ENCODE measurements at regions of chr13 and their contacts with region 1.

Region 1: GRCh38 chr13:48769107-48769704 is 115.5 kb downstream of the CYSLTR2 start:
- DNase-seq: peak; percentile 41
- H3K4me3 ChIP-seq: no peak overlapping the region
- H3K27ac ChIP-seq: peak overlapping the region; percentile 47
- H3K4me1 ChIP-seq: peaks cover 9% of the 10 kb centered on the region
- H3K27me3 ChIP-seq: no peaks in the 10 kb centered on the region
- CTCF ChIP-seq: peak; percentile 99

Region 2: GRCh38 chr13:48194379-48194754 is 574.8 kb before region 1 on chr13:
- intact Hi-C with region 1: no loop called
- DNase-seq: no peak
- H3K4me3 ChIP-seq: no peak overlapping the region
- H3K27ac ChIP-seq: no peak overlapping the region
- H3K4me1 ChIP-seq: no peaks in the 10 kb centered on the region
- H3K27me3 ChIP-seq: no peaks in the 10 kb centered on the region
- CTCF ChIP-seq: no peak

Region 3: GRCh38 chr13:48334534-48335127 is 434.6 kb before region 1 on chr13:
- intact Hi-C with region 1: loop called (anchors 2 kb)
- DNase-seq: no peak
- H3K4me3 ChIP-seq: no peak overlapping the region
- H3K27ac ChIP-seq: no peak overlapping the region
- H3K4me1 ChIP-seq: peaks cover 6% of the 10 kb centered on the region
- H3K27me3 ChIP-seq: no peaks in the 10 kb centered on the region
- CTCF ChIP-seq: peak; percentile 78

Region 4: GRCh38 chr13:48477191-48477855 is 291.9 kb before region 1 on chr13:
- intact Hi-C with region 1: no loop called
- DNase-seq: no peak
- H3K4me3 ChIP-seq: peak overlapping the region; percentile 8
- H3K27ac ChIP-seq: peak overlapping the region; percentile 34
- H3K4me1 ChIP-seq: peaks cover 2% of the 10 kb centered on the region
- H3K27me3 ChIP-seq: no peaks in the 10 kb centered on the region
- CTCF ChIP-seq: no peak

Region 5: GRCh38 chr13:48595431-48596429 is 173.5 kb before region 1 on chr13:
- intact Hi-C with region 1: loop called (anchors 5 kb)
- DNase-seq: peak; percentile 49
- H3K4me3 ChIP-seq: no peak overlapping the region
- H3K27ac ChIP-seq: peak overlapping the region; percentile 28
- H3K4me1 ChIP-seq: peaks cover 3% of the 10 kb centered on the region
- H3K27me3 ChIP-seq: no peaks in the 10 kb centered on the region
- CTCF ChIP-seq: peak; percentile 78

Region 6: GRCh38 chr13:48892053-48892690 is 123.0 kb after region 1 on chr13:
- intact Hi-C with region 1: no loop called
- DNase-seq: no peak
- H3K4me3 ChIP-seq: no peak overlapping the region
- H3K27ac ChIP-seq: no peak overlapping the region
- H3K4me1 ChIP-seq: peaks cover 7% of the 10 kb centered on the region
- H3K27me3 ChIP-seq: no peaks in the 10 kb centered on the region
- CTCF ChIP-seq: no peak

Measured in left ventricle myocardium inferior (tissue), 1 donor.